Left lung (tissue), 14 donors: ENCODE measurements at regions of chr12 and their contacts with region 1.

Region 1: GRCh38 chr12:121773011-121773777 is 20.3 kb downstream of the RHOF start:
- DNase-seq: peak in 3 of 4 donors; percentile 71 to 92 (median 77)
- ATAC-seq: peak; percentile 82
- H3K4me3 ChIP-seq: no peak overlapping the region
- H3K27ac ChIP-seq: peak overlapping the region; percentile 28 to 40
- H3K4me1 ChIP-seq: peaks cover 2 to 16% of the 10 kb centered on the region in 2 donors
- H3K27me3 ChIP-seq: no peaks in the 10 kb centered on the region
- CTCF ChIP-seq: peak; percentile 59 to 68

Region 2: GRCh38 chr12:121668750-121669520 is 104.3 kb before region 1 on chr12:
- intact Hi-C with region 1: no loop called
- DNase-seq: peak in 1 of 4 donors; percentile 65
- ATAC-seq: no peak
- H3K4me3 ChIP-seq: no peak overlapping the region
- H3K27ac ChIP-seq: no peak overlapping the region
- H3K4me1 ChIP-seq: peaks cover 7 to 29% of the 10 kb centered on the region in 2 donors
- H3K27me3 ChIP-seq: no peaks in the 10 kb centered on the region
- CTCF ChIP-seq: peak; percentile 33 to 60

Region 3: GRCh38 chr12:121697098-121697698 is 76.0 kb before region 1 on chr12:
- intact Hi-C with region 1: loop called in 1 of 2 experiments (anchors 5 kb)
- DNase-seq: peak in 1 of 4 donors; percentile 63
- ATAC-seq: peak; percentile 30
- H3K4me3 ChIP-seq: no peak overlapping the region
- H3K27ac ChIP-seq: no peak overlapping the region
- H3K4me1 ChIP-seq: no peaks in the 10 kb centered on the region
- H3K27me3 ChIP-seq: no peaks in the 10 kb centered on the region
- CTCF ChIP-seq: peak; percentile 66 to 67

Region 4: DNA sequence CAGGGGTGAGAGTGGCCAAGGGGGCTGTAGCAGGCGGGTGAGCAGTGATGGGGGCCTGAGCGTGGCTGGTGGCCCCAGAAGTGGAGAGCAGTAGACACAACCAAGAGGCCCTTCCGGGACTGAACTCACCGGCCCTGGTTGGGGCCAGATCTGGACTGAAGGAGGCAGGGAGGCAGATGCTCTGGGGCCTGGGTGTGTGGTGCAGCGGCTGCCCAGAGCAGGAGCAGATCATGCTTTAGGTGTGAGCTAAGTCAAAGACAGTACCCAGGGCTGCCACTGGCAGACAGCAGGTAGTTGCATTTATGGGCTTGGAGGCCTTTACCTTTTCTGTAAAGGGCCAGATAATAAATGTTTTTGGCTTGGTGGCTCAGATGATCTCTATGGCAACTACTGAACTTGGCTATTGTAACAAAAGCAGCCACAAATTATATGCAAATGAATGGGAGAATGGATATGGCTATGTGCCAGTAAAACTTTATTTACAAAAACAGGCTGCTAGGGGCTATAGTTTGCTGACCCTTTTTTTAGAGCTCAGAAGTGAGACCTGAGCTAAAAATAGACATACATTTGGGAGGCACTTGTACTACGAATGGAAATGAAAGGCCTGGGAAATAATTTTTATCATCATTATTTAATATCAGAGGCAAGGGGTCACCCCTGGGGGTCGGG is 56.2 kb after region 1 on chr12:
- intact Hi-C with region 1: no loop called
- DNase-seq: no peak
- ATAC-seq: no peak
- H3K4me3 ChIP-seq: no peak overlapping the region
- H3K27ac ChIP-seq: no peak overlapping the region
- H3K4me1 ChIP-seq: no peaks in the 10 kb centered on the region
- H3K27me3 ChIP-seq: no peaks in the 10 kb centered on the region
- CTCF ChIP-seq: no peak